ENCODE measurements at regions of chr5 and their contacts with region 1.

Region 1: GRCh38 chr5:39424736-39425637 is at the start of gene DAB2:
- DNase-seq: peak; percentile 36
- H3K4me3 ChIP-seq: peak within 1 kb of the TSS; percentile 48 to 50
- H3K27ac ChIP-seq: peak within 1 kb of the TSS; percentile 66 to 71
- H3K4me1 ChIP-seq: no peaks in the 10 kb centered on the region
- H3K27me3 ChIP-seq: no peaks in the 10 kb centered on the region
- CTCF ChIP-seq: peak in 3 of 4 experiments; percentile 22 to 38 (median 37)
- POLR2A ChIP-seq: no peak
- total RNA-seq, gene DAB2: 15.6 to 38.1 TPM

Region 2: DNA sequence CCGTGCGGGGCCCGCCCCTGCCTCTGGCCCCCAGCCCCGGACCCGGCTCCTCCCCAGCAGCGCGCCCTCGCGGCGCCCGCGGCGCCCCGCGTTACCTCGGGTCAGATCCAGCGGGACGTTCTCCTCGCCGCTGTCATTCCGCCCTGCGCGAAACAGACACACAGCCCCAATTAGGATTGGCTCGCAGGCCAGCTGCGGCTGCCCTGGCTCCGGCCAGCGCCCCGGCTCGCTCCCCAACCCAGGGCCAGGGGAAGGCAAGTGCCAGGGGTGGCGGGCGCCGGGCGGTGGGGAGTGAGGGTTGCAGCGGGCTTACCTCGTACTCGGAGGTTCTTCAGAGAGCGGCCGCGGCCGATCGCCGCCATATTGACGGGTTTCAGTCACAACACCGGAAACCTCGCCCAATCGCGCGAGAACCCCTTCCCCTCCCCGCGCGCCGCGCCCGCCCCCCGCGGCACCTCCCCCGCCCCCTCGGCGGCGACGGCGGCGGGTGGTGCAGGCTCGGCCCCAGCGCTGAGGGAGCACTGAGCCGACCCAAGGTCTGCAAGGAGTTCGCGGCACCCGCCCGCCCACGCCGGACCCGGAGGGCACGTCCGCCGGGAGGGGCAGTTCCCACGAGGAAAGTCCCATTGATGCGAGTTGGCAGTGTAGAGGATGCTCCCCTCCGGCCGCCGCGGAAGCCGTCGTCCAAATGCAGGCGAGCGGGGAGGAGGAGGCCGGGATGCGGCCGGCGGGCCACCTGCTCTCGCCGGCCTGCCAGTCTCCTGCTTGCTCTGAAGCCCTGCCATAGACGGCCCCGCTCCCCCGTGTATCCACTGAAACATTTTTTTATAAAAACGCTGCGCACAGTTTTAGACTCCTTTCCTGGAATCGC is 350.7 kb before region 1 on chr5 and contains the start of gene RICTOR:
- intact Hi-C with region 1: no loop called
- DNase-seq: peak; percentile 87
- H3K4me3 ChIP-seq: peak within 1 kb of the TSS; percentile 98 to 99
- H3K27ac ChIP-seq: peak within 1 kb of the TSS; percentile 99 to 100
- H3K4me1 ChIP-seq: peaks cover 4% of the 10 kb centered on the region
- H3K27me3 ChIP-seq: no peaks in the 10 kb centered on the region
- CTCF ChIP-seq: no peak
- POLR2A ChIP-seq: peak; percentile 53
- total RNA-seq, gene RICTOR: 21.5 to 36.8 TPM

Region 3: GRCh38 chr5:39547553-39548154 is 122.7 kb after region 1 on chr5:
- intact Hi-C with region 1: loop called (anchors 5 kb)
- DNase-seq: peak; percentile 39
- H3K4me3 ChIP-seq: no peak overlapping the region
- H3K27ac ChIP-seq: no peak overlapping the region
- H3K4me1 ChIP-seq: no peaks in the 10 kb centered on the region
- H3K27me3 ChIP-seq: no peaks in the 10 kb centered on the region
- CTCF ChIP-seq: peak; percentile 11 to 75 (median 70)
- POLR2A ChIP-seq: no peak

Measured in prostate gland (tissue), 2 donors.